ENCODE measurements at regions of chr2 and their contacts with region 1.

Region 1: DNA sequence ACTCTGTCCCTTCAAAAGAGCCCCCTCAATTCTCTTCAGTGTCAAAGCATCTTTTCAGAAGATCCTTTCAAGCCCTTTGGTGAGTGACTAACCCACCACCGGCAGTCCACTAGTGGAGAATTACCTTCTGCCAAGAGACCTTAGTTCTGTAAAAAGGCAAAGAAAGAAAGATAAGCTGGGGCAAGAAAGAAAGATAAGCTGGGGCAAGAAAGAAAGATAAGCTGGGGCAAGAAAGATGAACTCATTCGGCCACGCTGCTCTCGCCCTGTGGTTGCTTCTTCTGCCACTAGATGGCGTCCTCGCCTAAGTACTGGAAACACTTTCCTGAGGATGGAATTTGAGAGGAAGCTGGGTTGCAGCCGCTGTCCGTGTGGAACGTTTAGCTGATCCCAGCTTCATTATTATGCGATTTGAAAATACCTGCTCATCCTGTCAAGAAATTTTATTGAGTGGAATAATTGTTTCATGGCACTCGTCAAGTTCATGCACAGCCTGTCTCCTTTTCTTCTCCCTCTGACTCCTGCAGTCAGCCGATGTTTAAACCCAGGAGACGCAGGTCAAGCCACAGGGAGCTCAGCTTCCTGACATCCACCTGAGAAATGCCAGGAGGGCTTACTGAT is 17.3 kb upstream of the ANXA4 start:
- DNase-seq: peak; percentile 96
- H3K4me3 Mint-ChIP-seq: peak overlapping the region; percentile 70
- H3K27ac Mint-ChIP-seq: no peak overlapping the region
- H3K4me1 Mint-ChIP-seq: peaks cover 3% of the 10 kb centered on the region
- H3K27me3 Mint-ChIP-seq: peaks cover 3% of the 10 kb centered on the region

Region 2: DNA sequence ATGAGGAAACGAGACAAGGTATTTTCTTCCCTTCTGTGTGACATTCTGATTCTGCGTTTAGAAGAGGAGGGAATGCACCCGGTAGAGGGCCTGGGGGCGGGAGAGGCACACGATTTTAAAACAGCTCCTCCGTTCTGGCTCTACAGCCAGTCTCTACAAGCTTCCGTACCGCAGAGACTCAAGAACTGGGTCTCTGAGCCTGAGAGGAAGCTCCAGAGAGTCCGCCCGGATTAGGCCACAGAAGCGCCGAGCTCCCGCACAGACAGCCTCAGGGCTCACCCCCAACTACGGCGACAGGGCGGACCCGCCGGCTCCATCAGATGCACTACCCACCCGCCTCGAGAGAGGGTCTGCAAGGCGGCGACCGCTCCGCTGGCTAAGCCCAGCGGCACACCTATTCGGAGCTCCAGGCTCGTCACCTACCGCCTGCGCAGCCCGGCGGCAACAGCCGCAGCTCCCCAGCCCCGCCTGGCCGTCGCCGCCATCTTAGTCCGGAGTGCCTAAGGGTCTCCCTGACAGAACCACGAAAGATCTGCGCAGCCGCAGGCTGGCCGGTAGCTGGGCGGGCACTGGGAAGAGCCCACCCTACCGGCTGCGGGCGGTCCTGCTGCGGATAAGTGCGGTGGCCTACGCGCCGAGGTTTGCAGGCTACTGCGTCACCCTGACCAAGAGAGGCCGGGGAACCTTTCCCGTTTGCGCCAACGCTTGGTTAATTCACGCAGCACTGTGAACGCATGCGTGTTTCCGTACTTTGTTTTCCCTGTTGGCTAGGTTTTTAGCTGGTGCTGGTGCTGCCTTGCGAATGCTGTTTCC is 287.5 kb before region 1 on chr2 and contains the start of gene NFU1:
- intact Hi-C with region 1: no loop called
- DNase-seq: peak; percentile 95
- H3K4me3 Mint-ChIP-seq: peak within 1 kb of the TSS; percentile 95
- H3K27ac Mint-ChIP-seq: peak within 1 kb of the TSS; percentile 98
- H3K4me1 Mint-ChIP-seq: peaks cover 17% of the 10 kb centered on the region
- H3K27me3 Mint-ChIP-seq: no peaks in the 10 kb centered on the region
- total RNA-seq, gene NFU1: 30.4 and 32.3 TPM in 2 replicates

Region 3: GRCh38 chr2:69816923-69817542 is 92.4 kb after region 1 on chr2:
- intact Hi-C with region 1: loop called (anchors 1 kb)
- DNase-seq: peak; percentile 93
- H3K4me3 Mint-ChIP-seq: no peak overlapping the region
- H3K27ac Mint-ChIP-seq: no peak overlapping the region
- H3K4me1 Mint-ChIP-seq: peaks cover 5% of the 10 kb centered on the region
- H3K27me3 Mint-ChIP-seq: no peaks in the 10 kb centered on the region

Region 4: DNA sequence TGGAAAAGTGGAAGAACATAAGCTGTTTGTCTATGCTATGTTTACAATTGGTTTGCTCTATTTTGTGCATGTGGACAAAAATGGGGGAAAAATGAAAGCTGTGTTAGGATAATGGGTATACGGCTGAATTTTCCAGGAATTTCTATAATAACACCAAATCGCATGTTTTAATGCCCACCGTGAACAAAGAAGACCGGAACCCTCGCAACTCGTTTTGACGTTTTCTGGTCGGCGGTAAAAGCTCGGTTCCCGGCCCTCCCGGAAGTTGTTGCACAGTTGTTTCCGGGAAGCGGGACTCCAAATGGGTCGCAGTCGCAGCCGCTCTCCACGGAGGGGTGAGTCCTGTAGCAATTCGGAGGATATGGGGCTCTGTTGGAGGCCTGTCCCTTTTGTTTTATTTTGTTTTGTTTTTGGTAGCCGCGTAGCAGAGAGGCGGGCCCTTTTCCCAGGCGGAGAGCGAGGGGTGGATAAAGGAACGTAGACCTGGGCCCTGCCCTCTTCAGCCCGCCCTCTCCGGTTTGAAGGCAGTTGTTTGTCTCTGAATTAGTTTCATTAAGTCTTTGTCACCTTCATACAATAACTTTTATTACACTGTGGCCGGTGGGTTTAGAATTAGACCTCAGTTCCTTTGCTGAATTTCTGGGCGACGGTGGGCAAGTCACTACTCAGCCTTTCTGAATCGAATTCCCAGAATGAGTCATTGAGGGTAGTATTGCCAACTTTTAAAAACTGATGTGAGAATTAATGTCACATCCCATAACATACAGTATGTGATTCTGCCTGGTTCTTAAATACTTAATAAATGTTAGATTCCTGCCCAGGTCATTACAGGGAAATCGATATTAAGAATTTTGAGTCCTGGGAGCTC is 169.3 kb after region 1 on chr2 and contains the start of gene SNRNP27:
- intact Hi-C with region 1: loop called (anchors 10 kb)
- DNase-seq: peak; percentile 93
- H3K4me3 Mint-ChIP-seq: peak within 1 kb of the TSS; percentile 99
- H3K27ac Mint-ChIP-seq: peak within 1 kb of the TSS; percentile 97
- H3K4me1 Mint-ChIP-seq: peaks cover 28% of the 10 kb centered on the region
- H3K27me3 Mint-ChIP-seq: no peaks in the 10 kb centered on the region
- total RNA-seq, gene SNRNP27: 61.1 and 63.3 TPM in 2 replicates